Ovary (tissue), 10 donors: ENCODE measurements at regions of chr2 and their contacts with region 1.

Region 1: GRCh38 chr2:322326-322725 is 34.4 kb upstream of the ALKAL2 start:
- DNase-seq: no peak
- H3K4me3 ChIP-seq: no peak overlapping the region
- H3K27ac ChIP-seq: no peak overlapping the region
- H3K4me1 ChIP-seq: no peaks in the 10 kb centered on the region
- H3K27me3 ChIP-seq: no peaks in the 10 kb centered on the region
- CTCF ChIP-seq: no peak
- EP300 ChIP-seq: no peak
- POLR2A ChIP-seq: no peak

Region 2: DNA sequence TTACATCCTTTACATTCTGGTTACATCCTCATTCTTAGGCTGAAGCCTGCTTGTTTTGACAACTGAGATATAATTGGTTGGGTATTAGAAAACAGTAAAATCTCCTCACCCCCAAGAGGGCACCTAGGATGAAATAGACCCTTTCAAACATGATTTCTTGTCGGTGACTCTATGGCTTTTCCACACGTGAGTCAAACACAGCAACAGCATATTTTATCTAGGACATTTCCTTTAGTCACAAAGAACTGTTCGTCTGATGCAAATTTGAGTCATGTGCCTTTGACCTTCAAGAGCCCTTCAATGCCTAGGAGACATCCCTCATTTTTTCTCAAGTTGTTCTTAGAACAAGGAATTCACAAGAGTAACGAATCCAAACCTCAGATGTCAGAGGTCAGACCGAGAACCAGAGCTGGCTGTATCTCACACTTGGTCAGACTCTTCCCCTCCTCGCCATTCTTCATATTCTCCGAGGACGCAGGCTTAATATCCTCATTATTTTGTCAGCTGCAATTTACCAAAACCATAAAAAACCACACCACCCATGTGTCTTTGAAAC is 26.1 kb after region 1 on chr2:
- intact Hi-C with region 1: loop called in 1 of 4 experiments (anchors 2 kb)
- DNase-seq: no peak
- H3K4me3 ChIP-seq: no peak overlapping the region
- H3K27ac ChIP-seq: no peak overlapping the region
- H3K4me1 ChIP-seq: no peaks in the 10 kb centered on the region
- H3K27me3 ChIP-seq: no peaks in the 10 kb centered on the region
- CTCF ChIP-seq: no peak
- EP300 ChIP-seq: no peak
- POLR2A ChIP-seq: no peak

Region 3: DNA sequence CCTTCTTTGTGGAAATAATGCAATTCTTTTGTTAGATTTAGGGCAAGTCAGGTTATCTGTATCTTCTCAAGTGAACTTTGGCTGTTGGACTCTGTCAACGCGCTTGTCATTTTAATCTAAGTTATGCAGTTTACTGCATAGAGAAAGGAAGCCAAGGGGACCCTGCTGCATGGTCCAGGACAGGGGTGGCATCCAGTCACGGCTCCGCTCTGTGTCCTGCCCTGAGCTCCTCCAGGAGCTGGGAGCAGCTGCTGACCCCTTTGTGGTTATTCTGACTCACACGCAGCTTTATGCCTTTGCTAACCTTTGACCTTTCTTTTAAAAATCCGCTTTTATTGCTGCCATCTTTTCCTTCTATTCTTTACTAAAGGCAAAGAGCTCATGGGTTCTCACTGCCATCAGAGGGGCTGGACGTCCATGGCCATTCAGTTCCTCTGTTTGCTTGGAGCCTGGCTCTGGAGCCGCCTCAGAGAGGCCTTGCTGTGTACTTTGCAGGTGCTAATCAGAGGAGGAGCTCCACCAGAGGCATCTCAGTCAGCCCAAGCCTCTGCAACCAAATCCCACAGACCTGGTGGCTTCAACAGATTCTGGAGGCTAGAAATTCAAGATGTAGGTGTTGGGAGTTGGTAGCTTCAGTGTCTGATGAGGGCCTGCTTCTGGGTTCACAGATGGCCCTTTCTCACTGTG is 667.6 kb after region 1 on chr2:
- intact Hi-C with region 1: no loop called
- DNase-seq: no peak
- H3K4me3 ChIP-seq: no peak overlapping the region
- H3K27ac ChIP-seq: no peak overlapping the region
- H3K4me1 ChIP-seq: no peaks in the 10 kb centered on the region
- H3K27me3 ChIP-seq: no peaks in the 10 kb centered on the region
- CTCF ChIP-seq: no peak
- EP300 ChIP-seq: no peak
- POLR2A ChIP-seq: no peak